Posterior cingulate gyrus (tissue), 11 donors: ENCODE measurements at regions of chr7 and their contacts with region 1.

Region 1: DNA sequence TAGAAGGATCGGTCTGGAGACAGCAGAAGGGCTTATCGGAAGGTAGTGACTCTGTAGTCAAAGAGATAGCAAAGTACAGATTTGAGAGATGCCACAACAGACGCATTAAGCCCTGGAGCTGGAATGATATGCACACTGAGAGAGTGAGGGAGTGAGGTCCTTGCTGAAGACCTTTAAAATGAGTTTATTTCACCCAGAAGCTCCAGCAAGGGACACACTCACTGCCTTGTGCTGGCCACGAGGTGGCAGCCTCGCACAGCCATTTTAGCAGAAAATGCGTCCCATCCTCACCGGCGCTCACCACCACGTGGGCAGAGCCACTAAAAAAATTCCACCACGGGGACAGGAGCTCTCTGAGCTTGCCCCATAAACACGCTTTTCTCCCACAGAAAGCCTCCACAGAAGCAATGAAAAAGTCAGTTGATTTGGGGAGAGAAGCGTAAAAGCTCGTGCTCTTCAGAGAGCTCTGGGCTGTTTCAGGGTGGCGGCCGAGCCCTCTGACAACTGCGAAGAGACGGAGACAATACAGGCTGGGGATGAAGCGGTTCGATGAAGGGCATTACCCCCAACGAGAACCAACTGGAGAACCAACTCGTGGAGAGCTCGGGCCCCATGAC is 163.0 kb upstream of the KLF14 start:
- DNase-seq: peak; percentile 73 to 98 (median 80)

Region 2: DNA sequence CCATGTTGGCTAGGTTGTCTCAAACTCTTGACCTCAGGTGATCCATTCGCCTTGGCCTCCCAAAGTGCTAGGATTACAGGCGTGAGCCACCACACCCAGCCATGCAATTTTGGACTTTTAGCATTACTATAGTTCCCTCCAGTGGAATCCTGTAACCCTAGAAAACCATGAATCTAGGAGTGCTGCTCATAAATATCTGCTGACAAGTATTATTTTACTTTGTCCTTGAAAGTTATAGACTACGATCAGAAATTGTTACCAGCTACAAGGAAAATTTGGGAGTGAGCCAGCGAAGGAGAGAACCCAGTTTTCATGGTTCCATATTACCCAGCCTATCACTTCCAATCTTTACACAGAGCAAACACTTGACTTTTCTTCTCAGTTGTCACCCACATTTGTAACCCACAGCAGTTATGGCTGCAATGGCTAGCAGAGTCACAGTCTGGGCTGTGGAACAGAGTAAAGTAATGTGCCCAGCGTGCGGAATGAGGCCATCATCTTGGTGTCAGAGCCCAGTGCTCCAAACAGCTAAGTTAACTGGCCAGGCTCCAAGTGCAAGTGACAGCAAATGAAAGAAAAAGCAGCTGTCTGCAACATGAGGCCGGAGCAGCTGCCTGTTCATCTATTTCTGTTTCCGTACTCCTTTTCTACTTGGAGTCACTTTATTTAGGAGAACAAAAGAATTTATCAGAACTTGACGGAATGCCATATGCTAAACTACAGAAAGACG is 875.7 kb before region 1 on chr7:
- intact Hi-C with region 1: no loop called
- DNase-seq: peak in 4 of 10 donors; percentile 17 to 30 (median 29)

Region 3: GRCh38 chr7:131007394-131008330 is 110.7 kb after region 1 on chr7:
- intact Hi-C with region 1: loop called (anchors 1 kb)
- DNase-seq: peak in 8 of 10 donors; percentile 39 to 93 (median 60)

Region 4: GRCh38 chr7:131040467-131040932 is 143.5 kb after region 1 on chr7:
- intact Hi-C with region 1: loop called (anchors 1 kb)
- DNase-seq: peak in 2 of 10 donors; percentile 30 to 38